ENCODE measurements at regions of chr18 and their contacts with region 1.

Region 1: GRCh38 chr18:74353169-74353775 is 37.6 kb downstream of the C18orf63 start:
- DNase-seq: peak; percentile 63
- ATAC-seq: peak; percentile 49
- H3K4me3 ChIP-seq: no peak overlapping the region
- H3K4me3 Mint-ChIP-seq: no peak overlapping the region
- H3K27ac ChIP-seq: no peak overlapping the region
- H3K27ac Mint-ChIP-seq: no peak overlapping the region
- H3K4me1 ChIP-seq: peaks cover 4 to 8% of the 10 kb centered on the region in 2 donors
- H3K4me1 Mint-ChIP-seq: peaks cover 11% of the 10 kb centered on the region
- H3K27me3 ChIP-seq: no peaks in the 10 kb centered on the region
- H3K27me3 Mint-ChIP-seq: no peaks in the 10 kb centered on the region
- CTCF ChIP-seq: peak; percentile 53

Region 2: GRCh38 chr18:73793386-73793785 is 559.9 kb before region 1 on chr18:
- CTCF ChIA-PET with region 1: no interaction called
- POLR2A ChIA-PET with region 1: no interaction called
- intact Hi-C with region 1: no loop called
- DNase-seq: no peak
- ATAC-seq: no peak
- H3K4me3 ChIP-seq: no peak overlapping the region
- H3K4me3 Mint-ChIP-seq: no peak overlapping the region
- H3K27ac ChIP-seq: no peak overlapping the region
- H3K27ac Mint-ChIP-seq: no peak overlapping the region
- H3K4me1 ChIP-seq: no peaks in the 10 kb centered on the region
- H3K4me1 Mint-ChIP-seq: no peaks in the 10 kb centered on the region
- H3K27me3 ChIP-seq: no peaks in the 10 kb centered on the region
- H3K27me3 Mint-ChIP-seq: no peaks in the 10 kb centered on the region
- CTCF ChIP-seq: no peak

Region 3: GRCh38 chr18:74310411-74310810 is 42.9 kb before region 1 on chr18:
- CTCF ChIA-PET with region 1: no interaction called
- POLR2A ChIA-PET with region 1: no interaction called
- intact Hi-C with region 1: loop called (anchors 5 kb)
- DNase-seq: peak; percentile 65
- ATAC-seq: no peak
- H3K4me3 ChIP-seq: no peak overlapping the region
- H3K4me3 Mint-ChIP-seq: no peak overlapping the region
- H3K27ac ChIP-seq: no peak overlapping the region
- H3K27ac Mint-ChIP-seq: no peak overlapping the region
- H3K4me1 ChIP-seq: peaks cover 0 to 3% of the 10 kb centered on the region in 2 donors
- H3K4me1 Mint-ChIP-seq: no peaks in the 10 kb centered on the region
- H3K27me3 ChIP-seq: peaks cover 0 to 4% (median 0%) of the 10 kb centered on the region in 4 experiments
- H3K27me3 Mint-ChIP-seq: peaks cover 22% of the 10 kb centered on the region
- CTCF ChIP-seq: no peak

Region 4: GRCh38 chr18:74631623-74632283 is 278.5 kb after region 1 on chr18:
- CTCF ChIA-PET with region 1: no interaction called
- POLR2A ChIA-PET with region 1: no interaction called
- intact Hi-C with region 1: no loop called
- DNase-seq: no peak
- ATAC-seq: no peak
- H3K4me3 ChIP-seq: no peak overlapping the region
- H3K4me3 Mint-ChIP-seq: no peak overlapping the region
- H3K27ac ChIP-seq: no peak overlapping the region
- H3K27ac Mint-ChIP-seq: peak overlapping the region; percentile 29
- H3K4me1 ChIP-seq: no peaks in the 10 kb centered on the region
- H3K4me1 Mint-ChIP-seq: peaks cover 12% of the 10 kb centered on the region
- H3K27me3 ChIP-seq: no peaks in the 10 kb centered on the region
- H3K27me3 Mint-ChIP-seq: no peaks in the 10 kb centered on the region
- CTCF ChIP-seq: no peak